ENCODE measurements at regions of chr20 and their contacts with region 1.

Region 1: GRCh38 chr20:14477125-14477524 is 139.7 kb upstream of the FLRT3 start:
- DNase-seq: no peak
- H3K4me3 ChIP-seq: no peak overlapping the region
- H3K27ac ChIP-seq: no peak overlapping the region
- H3K4me1 ChIP-seq: peaks cover 5% of the 10 kb centered on the region
- H3K27me3 ChIP-seq: no peaks in the 10 kb centered on the region
- CTCF ChIP-seq: no peak
- POLR2A ChIP-seq: no peak

Region 2: GRCh38 chr20:14245368-14245970 is 231.7 kb before region 1 on chr20:
- CTCF ChIA-PET with region 1: no interaction called
- POLR2A ChIA-PET with region 1: no interaction called
- dilution Hi-C with region 1: no loop called
- intact Hi-C with region 1: no loop called
- DNase-seq: no peak
- H3K4me3 ChIP-seq: no peak overlapping the region
- H3K27ac ChIP-seq: no peak overlapping the region
- H3K4me1 ChIP-seq: no peaks in the 10 kb centered on the region
- H3K27me3 ChIP-seq: no peaks in the 10 kb centered on the region
- CTCF ChIP-seq: no peak
- POLR2A ChIP-seq: no peak

Region 3: DNA sequence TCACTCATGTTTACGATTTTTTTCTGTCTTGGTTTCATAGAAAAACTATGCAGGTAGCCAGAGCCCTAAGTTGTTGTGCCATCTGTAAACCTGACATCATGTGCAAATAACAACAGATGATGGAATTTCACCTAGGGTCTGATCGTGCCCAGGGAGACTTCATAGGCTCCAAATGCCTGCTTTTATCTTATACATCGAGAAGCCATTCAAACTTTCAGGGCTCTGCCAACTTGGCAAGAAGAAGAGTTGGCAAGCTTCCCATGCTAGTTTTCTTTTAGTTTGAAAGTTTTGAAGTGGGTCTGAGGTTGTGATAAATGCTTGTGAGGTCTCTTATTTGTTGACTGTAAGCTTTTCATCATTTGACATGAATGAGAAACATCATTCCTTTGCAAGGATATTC is 35.7 kb after region 1 on chr20:
- CTCF ChIA-PET with region 1: no interaction called
- POLR2A ChIA-PET with region 1: no interaction called
- dilution Hi-C with region 1: no loop called
- intact Hi-C with region 1: no loop called
- DNase-seq: peak; percentile 39
- H3K4me3 ChIP-seq: no peak overlapping the region
- H3K27ac ChIP-seq: no peak overlapping the region
- H3K4me1 ChIP-seq: peaks cover 5% of the 10 kb centered on the region
- H3K27me3 ChIP-seq: peaks cover 0 to 4% of the 10 kb centered on the region in 2 experiments
- CTCF ChIP-seq: no peak
- POLR2A ChIP-seq: no peak

Region 4: DNA sequence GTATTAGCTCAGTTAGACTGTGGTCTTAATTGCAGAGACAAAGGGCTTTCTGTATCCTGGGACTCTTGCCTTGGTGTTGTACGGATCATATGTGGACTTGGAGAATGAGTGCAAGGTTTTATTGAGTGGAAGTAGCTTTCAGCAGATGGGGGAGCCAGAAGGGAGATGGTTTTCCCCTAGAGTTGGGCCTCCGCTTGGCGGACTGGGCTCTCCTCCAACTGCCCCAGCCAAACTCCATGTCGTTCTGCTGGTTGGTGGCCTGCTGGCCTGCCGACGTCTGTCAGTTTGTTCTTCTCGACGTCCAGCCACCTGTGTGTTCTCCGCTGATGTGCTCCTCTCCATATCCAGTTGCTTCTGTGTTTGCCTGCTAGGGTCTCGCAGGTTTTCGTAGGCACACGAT is 49.8 kb after region 1 on chr20:
- CTCF ChIA-PET with region 1: no interaction called
- POLR2A ChIA-PET with region 1: no interaction called
- dilution Hi-C with region 1: no loop called
- intact Hi-C with region 1: loop called (anchors 1 kb)
- DNase-seq: no peak
- H3K4me3 ChIP-seq: no peak overlapping the region
- H3K27ac ChIP-seq: no peak overlapping the region
- H3K4me1 ChIP-seq: no peaks in the 10 kb centered on the region
- H3K27me3 ChIP-seq: peaks cover 0 to 2% of the 10 kb centered on the region in 2 experiments
- CTCF ChIP-seq: no peak
- POLR2A ChIP-seq: no peak

Region 5: DNA sequence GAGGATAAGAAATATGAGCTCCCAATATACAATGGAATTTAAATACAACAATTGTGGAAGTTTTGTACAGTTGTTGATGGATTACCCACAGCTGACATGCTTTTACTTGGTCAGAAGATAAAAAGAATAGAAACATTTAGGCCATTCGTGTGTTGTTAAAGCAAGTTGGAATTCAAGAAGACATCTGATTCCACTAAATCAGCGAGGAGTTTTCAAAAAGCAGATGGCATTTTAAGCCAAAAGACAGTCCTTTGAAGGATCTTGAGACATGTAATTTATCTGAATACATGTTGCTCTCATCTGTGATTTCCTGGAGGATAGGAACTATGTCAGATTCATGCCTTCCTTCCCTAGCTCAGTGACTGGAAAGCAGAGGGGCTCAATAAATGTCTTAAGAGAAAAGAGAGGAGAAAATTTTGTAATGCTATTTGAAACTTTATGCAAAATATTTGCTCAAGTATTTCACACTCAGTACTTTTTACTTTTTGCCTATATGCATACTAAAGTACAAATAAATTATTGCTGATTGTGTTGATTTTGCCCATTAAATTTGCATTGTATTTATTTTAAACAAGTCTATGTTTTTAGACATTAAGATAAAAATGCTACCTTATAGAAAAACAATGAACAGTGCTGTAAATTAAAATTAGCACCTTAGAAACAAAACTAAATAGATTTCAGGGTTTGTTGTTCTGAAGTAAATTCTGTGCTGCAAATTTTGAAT is 594.1 kb after region 1 on chr20:
- CTCF ChIA-PET with region 1: no interaction called
- POLR2A ChIA-PET with region 1: no interaction called
- dilution Hi-C with region 1: no loop called
- intact Hi-C with region 1: no loop called
- DNase-seq: no peak
- H3K4me3 ChIP-seq: no peak overlapping the region
- H3K27ac ChIP-seq: no peak overlapping the region
- H3K4me1 ChIP-seq: no peaks in the 10 kb centered on the region
- H3K27me3 ChIP-seq: no peaks in the 10 kb centered on the region
- CTCF ChIP-seq: no peak
- POLR2A ChIP-seq: no peak